Common myeloid progenitor, CD34-positive (primary cell): ENCODE measurements at regions of chr10 and their contacts with region 1.

Region 1: GRCh38 chr10:43304687-43305340 is 37.9 kb upstream of the RASGEF1A start:
- DNase-seq: peak; percentile 50 to 76 (median 61)
- H3K4me3 ChIP-seq: peak overlapping the region; percentile 35 to 72 (median 57)
- H3K27ac ChIP-seq: no peak overlapping the region
- H3K4me1 ChIP-seq: peaks cover 3 to 9% (median 7%) of the 10 kb centered on the region in 4 experiments
- H3K27me3 ChIP-seq: peaks cover 0 to 5% (median 0%) of the 10 kb centered on the region in 5 experiments

Region 2: DNA sequence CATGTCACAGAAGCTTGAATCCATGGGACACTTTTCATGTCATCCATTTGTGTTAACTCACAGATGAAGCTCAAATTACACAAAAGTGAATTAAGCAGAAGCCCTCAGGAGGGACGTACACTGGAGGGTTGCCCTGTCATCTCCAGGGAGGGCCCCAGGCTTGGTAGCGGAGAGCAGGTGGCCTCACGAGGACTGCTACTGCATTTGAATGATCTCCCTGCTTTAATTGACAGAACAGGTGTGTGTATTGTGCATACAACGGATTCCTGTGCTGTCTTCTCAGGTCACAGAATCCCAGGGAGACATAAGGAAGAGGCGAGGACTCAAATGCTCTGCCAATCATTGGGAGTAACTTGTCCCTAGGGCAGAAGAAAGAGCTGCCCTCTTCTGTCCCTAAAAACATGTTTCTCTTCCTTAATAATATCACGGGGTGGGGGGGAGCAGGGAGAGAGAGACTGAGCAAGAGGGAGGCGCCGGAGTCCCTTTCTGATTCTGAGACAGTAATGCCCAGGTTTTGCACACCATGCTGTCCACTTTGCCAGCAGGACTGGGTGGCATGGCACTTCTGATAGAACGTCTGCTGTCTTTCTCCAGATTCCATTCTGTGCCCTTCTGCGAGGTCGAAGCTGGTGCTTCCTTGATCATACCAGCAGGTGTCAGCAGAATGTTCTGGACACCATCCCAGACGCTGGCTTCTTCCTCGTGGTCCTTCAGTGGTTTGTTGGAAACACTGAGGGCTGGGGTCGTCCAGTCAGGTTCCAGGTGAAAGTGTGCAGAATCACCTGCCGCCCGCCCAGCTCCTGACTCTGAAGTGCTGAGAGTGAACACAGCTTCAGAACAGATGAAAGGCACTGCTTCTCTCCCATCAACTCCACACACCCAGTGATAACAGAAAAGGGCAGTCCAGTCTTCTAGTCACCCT is 11.8 kb before region 1 on chr10:
- CTCF ChIA-PET with region 1: interaction called, 16 read pairs
- POLR2A ChIA-PET with region 1: no interaction called
- DNase-seq: peak; percentile 42 to 60 (median 56)
- H3K4me3 ChIP-seq: peak overlapping the region in 1 of 7 experiments; percentile 11
- H3K27ac ChIP-seq: no peak overlapping the region
- H3K4me1 ChIP-seq: peaks cover 0 to 11% (median 4%) of the 10 kb centered on the region in 4 experiments
- H3K27me3 ChIP-seq: peaks cover 0 to 2% (median 0%) of the 10 kb centered on the region in 5 experiments